Activated CD4-positive, alpha-beta memory T cell treated with anti-CD3 and anti-CD28 coated beads for 36 hours (primary cell): ENCODE measurements at regions of chr1 and their contacts with region 1.

Region 1: DNA sequence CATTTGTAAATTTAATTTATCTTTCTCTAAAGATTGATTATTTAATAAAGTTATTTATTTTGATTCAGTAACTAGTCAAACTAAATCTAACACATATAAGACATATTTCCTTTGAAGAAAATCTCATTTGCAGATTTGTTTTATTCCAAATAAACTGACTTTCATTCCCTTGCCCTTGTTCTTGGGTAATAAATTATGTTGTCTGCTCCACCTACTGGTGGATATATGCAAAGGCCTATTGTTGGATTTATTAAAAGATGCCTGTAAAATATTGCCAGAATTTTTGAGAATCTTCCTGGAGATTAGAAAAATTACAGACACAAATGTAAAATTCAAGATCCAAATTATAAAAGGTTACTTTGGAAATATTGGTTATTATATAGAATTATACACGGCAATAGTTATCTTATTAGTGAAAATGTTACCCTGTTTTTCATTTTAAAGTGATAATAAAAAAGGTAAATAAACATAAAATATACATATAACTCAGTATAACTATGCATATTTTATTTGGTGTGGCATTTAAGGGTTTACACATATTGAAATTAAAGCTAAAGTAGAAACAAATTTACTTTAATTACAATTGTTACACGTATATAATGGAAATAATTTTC is 116.1 kb downstream of the SPATA17 start:
- DNase-seq: no peak
- H3K4me3 Mint-ChIP-seq: no peak overlapping the region
- H3K27ac Mint-ChIP-seq: no peak overlapping the region
- H3K4me1 Mint-ChIP-seq: no peaks in the 10 kb centered on the region
- H3K27me3 Mint-ChIP-seq: no peaks in the 10 kb centered on the region

Region 2: GRCh38 chr1:217431393-217431792 is 315.9 kb before region 1 on chr1:
- CTCF ChIA-PET with region 1: no interaction called
- POLR2A ChIA-PET with region 1: no interaction called
- intact Hi-C with region 1: loop called (anchors 5 kb)
- DNase-seq: no peak
- H3K4me3 Mint-ChIP-seq: no peak overlapping the region
- H3K27ac Mint-ChIP-seq: no peak overlapping the region
- H3K4me1 Mint-ChIP-seq: no peaks in the 10 kb centered on the region
- H3K27me3 Mint-ChIP-seq: no peaks in the 10 kb centered on the region

Region 3: GRCh38 chr1:218171285-218171893 is 424.1 kb after region 1 on chr1:
- CTCF ChIA-PET with region 1: no interaction called
- POLR2A ChIA-PET with region 1: no interaction called
- intact Hi-C with region 1: loop called (anchors 5 kb)
- DNase-seq: no peak
- H3K4me3 Mint-ChIP-seq: no peak overlapping the region
- H3K27ac Mint-ChIP-seq: no peak overlapping the region
- H3K4me1 Mint-ChIP-seq: no peaks in the 10 kb centered on the region
- H3K27me3 Mint-ChIP-seq: peaks cover 16% of the 10 kb centered on the region